GM12878 (cell line): ENCODE measurements at regions of chr15 and their contacts with region 1.

Region 1: GRCh38 chr15:85024509-85025214 is 43.0 kb downstream of the PDE8A start:
- DNase-seq: no peak
- ATAC-seq: peak; percentile 79
- H3K4me3 ChIP-seq: no peak overlapping the region
- H3K27ac ChIP-seq: peak overlapping the region; percentile 76
- H3K4me1 ChIP-seq: peaks cover 36% of the 10 kb centered on the region
- H3K27me3 ChIP-seq: no peaks in the 10 kb centered on the region
- CTCF ChIP-seq: no peak
- EP300 ChIP-seq: no peak
- POLR2A ChIP-seq: no peak
- RAD21 ChIP-seq: no peak

Region 2: DNA sequence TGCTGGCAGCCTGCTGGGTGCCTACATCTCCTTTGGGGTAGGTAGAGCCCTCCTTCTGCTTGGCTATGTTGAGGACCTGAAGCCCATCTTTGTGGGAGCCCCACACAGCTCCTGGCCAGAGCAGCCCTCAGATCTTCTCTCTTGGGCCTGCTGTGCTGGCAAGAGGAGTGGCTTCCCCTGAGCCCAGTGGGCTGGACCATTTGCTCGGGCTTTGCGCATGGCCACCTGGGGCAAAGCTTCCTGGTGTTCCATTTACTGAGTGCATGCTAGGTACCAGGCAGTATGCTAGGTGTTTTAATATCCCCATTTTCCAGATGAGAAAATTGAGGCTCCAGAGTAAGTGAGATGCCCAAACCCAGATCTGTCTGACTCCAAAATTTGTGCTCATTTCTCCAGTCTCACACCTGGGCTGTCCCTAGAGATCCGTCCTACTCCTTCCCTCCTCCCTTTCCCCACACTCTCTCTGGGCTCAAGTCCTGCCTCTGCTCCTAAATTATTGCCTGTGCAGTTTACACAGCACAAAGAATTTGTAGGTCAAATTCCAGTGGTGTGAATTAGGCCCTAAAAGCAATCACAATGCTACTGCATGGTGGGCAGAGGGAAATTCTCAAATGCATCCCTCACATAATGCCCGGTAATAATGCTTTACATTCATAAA is 100.5 kb before region 1 on chr15:
- CTCF ChIA-PET with region 1: no interaction called
- POLR2A ChIA-PET with region 1: no interaction called
- RAD21 ChIA-PET with region 1: no interaction called
- SMC1A ChIA-PET with region 1: no interaction called
- in situ Hi-C with region 1: no loop called
- intact Hi-C with region 1: no loop called
- DNase-seq: no peak
- ATAC-seq: no peak
- H3K4me3 ChIP-seq: no peak overlapping the region
- H3K27ac ChIP-seq: no peak overlapping the region
- H3K4me1 ChIP-seq: no peaks in the 10 kb centered on the region
- H3K27me3 ChIP-seq: no peaks in the 10 kb centered on the region
- CTCF ChIP-seq: no peak
- EP300 ChIP-seq: no peak
- POLR2A ChIP-seq: no peak
- RAD21 ChIP-seq: no peak

Region 3: GRCh38 chr15:85005319-85005718 is 19.3 kb before region 1 on chr15:
- CTCF ChIA-PET with region 1: interaction called, 9 read pairs
- POLR2A ChIA-PET with region 1: interaction called, 12 read pairs
- RAD21 ChIA-PET with region 1: interaction called, 21 read pairs
- SMC1A ChIA-PET with region 1: interaction called, 21 read pairs
- in situ Hi-C with region 1: no loop called
- intact Hi-C with region 1: no loop called
- DNase-seq: no peak
- ATAC-seq: no peak
- H3K4me3 ChIP-seq: no peak overlapping the region
- H3K27ac ChIP-seq: no peak overlapping the region
- H3K4me1 ChIP-seq: peaks cover 47% of the 10 kb centered on the region
- H3K27me3 ChIP-seq: no peaks in the 10 kb centered on the region
- CTCF ChIP-seq: no peak
- EP300 ChIP-seq: no peak
- POLR2A ChIP-seq: no peak
- RAD21 ChIP-seq: no peak

Region 4: GRCh38 chr15:85036716-85037115 is 12.1 kb after region 1 on chr15:
- CTCF ChIA-PET with region 1: interaction called, 7 read pairs
- POLR2A ChIA-PET with region 1: interaction called, 7 read pairs
- RAD21 ChIA-PET with region 1: interaction called, 3 read pairs
- SMC1A ChIA-PET with region 1: interaction called, 12 read pairs
- in situ Hi-C with region 1: no loop called
- intact Hi-C with region 1: no loop called
- DNase-seq: no peak
- ATAC-seq: peak; percentile 76
- H3K4me3 ChIP-seq: no peak overlapping the region
- H3K27ac ChIP-seq: no peak overlapping the region
- H3K4me1 ChIP-seq: peaks cover 10% of the 10 kb centered on the region
- H3K27me3 ChIP-seq: no peaks in the 10 kb centered on the region
- CTCF ChIP-seq: no peak
- EP300 ChIP-seq: no peak
- POLR2A ChIP-seq: no peak
- RAD21 ChIP-seq: no peak